Naive thymus-derived CD4-positive, alpha-beta T cell (primary cell): ENCODE measurements at regions of chr15 and their contacts with region 1.

Region 1: DNA sequence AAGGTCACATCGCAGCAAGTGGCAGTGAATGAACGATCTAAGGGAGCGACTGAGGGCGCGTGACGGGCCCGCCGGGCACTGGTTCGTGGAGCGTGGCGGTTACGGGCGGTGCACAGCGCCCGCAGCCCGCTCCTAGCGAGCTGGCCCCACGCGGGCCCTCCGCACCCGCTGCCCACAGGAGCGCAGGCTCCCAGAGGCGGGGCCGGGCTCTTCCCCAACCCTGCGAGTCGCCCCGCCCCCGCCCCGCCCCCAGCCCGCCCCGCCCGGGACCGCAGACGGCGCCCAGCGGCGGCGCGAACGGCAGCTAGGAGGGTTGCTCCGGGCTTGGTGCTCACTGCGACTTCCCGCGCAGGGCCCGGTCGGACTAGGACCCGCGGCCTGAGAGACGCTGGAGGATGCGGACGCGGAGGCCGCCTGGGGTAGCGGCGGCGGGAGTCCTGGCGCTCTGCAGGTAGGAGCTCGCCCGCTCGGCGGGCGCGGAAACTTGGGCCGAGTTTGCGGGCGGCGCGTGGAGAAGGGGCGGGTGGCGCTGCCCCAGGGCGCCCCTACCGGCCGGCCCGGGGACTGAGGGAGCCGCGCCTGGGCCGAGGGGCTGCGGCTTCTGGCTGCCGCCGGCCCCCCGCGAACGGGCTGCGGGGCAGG is at the start of gene C15orf39:
- DNase-seq: peak; percentile 66 to 88 (median 84)
- ATAC-seq: peak; percentile 78
- H3K4me3 ChIP-seq: peak within 1 kb of the TSS; percentile 84
- H3K4me3 Mint-ChIP-seq: peak within 1 kb of the TSS; percentile 89 to 98 (median 94)
- H3K27ac ChIP-seq: peak within 1 kb of the TSS; percentile 92
- H3K27ac Mint-ChIP-seq: peak within 1 kb of the TSS; percentile 69 to 95 (median 88)
- H3K4me1 ChIP-seq: peaks cover 26 to 27% of the 10 kb centered on the region in 2 donors
- H3K4me1 Mint-ChIP-seq: peaks cover 19 to 68% (median 39%) of the 10 kb centered on the region in 7 donors
- H3K27me3 ChIP-seq: no peaks in the 10 kb centered on the region
- H3K27me3 Mint-ChIP-seq: no peaks in the 10 kb centered on the region
- total RNA-seq, gene C15orf39: 30.9 to 124 (median 50.5) TPM

Region 2: GRCh38 chr15:73927476-73928240 is 1274.1 kb before region 1 on chr15:
- CTCF ChIA-PET with region 1: no interaction called
- POLR2A ChIA-PET with region 1: no interaction called
- intact Hi-C with region 1: loop called in 1 of 2 experiments (anchors 5 kb)
- DNase-seq: peak; percentile 69 to 86 (median 84)
- ATAC-seq: peak; percentile 93
- H3K4me3 ChIP-seq: peak overlapping the region; percentile 74
- H3K4me3 Mint-ChIP-seq: peak overlapping the region; percentile 62 to 83 (median 74)
- H3K27ac ChIP-seq: peak overlapping the region; percentile 77
- H3K27ac Mint-ChIP-seq: peak overlapping the region; percentile 26 to 69 (median 51)
- H3K4me1 ChIP-seq: peaks cover 15 to 21% of the 10 kb centered on the region in 2 donors
- H3K4me1 Mint-ChIP-seq: peaks cover 25 to 55% (median 39%) of the 10 kb centered on the region in 7 donors
- H3K27me3 ChIP-seq: no peaks in the 10 kb centered on the region
- H3K27me3 Mint-ChIP-seq: peaks cover 0 to 6% (median 0%) of the 10 kb centered on the region in 5 donors

Region 3: GRCh38 chr15:74787251-74788041 is 414.3 kb before region 1 on chr15:
- CTCF ChIA-PET with region 1: interaction called, 3 read pairs
- POLR2A ChIA-PET with region 1: no interaction called
- intact Hi-C with region 1: loop called (anchors 5 to 10 kb)
- DNase-seq: peak; percentile 69 to 97 (median 96)
- ATAC-seq: peak; percentile 85
- H3K4me3 ChIP-seq: peak overlapping the region; percentile 85
- H3K4me3 Mint-ChIP-seq: peak overlapping the region; percentile 87 to 97 (median 93)
- H3K27ac ChIP-seq: peak overlapping the region; percentile 92
- H3K27ac Mint-ChIP-seq: peak overlapping the region; percentile 95 to 99 (median 98)
- H3K4me1 ChIP-seq: peaks cover 66 to 72% of the 10 kb centered on the region in 2 donors
- H3K4me1 Mint-ChIP-seq: peaks cover 57 to 78% (median 75%) of the 10 kb centered on the region in 7 donors
- H3K27me3 ChIP-seq: no peaks in the 10 kb centered on the region
- H3K27me3 Mint-ChIP-seq: no peaks in the 10 kb centered on the region

Region 4: DNA sequence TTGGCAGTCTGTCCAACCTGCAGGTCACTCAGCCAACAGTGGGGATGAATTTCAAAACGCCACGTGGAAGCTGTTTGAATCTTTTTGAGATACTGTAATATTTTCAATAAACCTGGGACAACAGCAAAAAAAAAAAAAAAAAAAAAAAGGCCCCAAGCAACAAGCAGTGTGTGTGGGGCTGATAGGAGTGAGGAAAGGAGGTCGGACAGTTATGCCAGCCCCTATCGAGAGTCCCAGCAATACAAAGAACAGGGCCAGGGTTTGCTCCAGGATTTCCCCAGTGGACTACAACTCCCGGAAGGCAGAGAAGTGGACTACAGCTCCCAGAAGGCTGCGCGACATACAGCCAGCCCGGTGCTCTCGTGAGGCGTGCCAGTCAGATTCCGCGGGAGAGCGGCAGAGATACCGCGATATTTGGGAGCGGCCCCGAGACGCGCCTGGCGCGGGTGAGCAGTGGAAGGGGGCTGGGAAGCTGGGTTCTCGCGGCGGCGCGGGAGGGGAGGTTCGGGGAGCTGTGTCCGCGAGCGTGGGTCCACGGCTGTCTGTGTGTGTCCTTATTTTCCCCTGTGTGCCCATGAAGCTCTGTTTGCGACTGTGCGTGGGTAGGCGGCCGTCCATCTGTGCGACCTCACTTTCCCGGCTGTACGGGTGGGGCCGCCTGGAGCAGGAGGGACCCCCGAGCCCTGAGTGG is 178.4 kb before region 1 on chr15 and contains the start of gene PPCDC:
- CTCF ChIA-PET with region 1: interaction called, 59 read pairs
- POLR2A ChIA-PET with region 1: interaction called, 12 read pairs
- intact Hi-C with region 1: loop called in 1 of 2 experiments (anchors 1 kb)
- DNase-seq: peak; percentile 79 to 94 (median 91)
- ATAC-seq: peak; percentile 100
- H3K4me3 ChIP-seq: peak within 1 kb of the TSS; percentile 84
- H3K4me3 Mint-ChIP-seq: peak within 1 kb of the TSS; percentile 81 to 99 (median 97)
- H3K27ac ChIP-seq: peak within 1 kb of the TSS; percentile 84
- H3K27ac Mint-ChIP-seq: peak within 1 kb of the TSS; percentile 87 to 98 (median 93)
- H3K4me1 ChIP-seq: no peaks in the 10 kb centered on the region
- H3K4me1 Mint-ChIP-seq: peaks cover 11 to 30% (median 26%) of the 10 kb centered on the region in 7 donors
- H3K27me3 ChIP-seq: no peaks in the 10 kb centered on the region
- H3K27me3 Mint-ChIP-seq: no peaks in the 10 kb centered on the region
- total RNA-seq, gene PPCDC: 11.7 to 31.3 (median 17.1) TPM

Region 5: GRCh38 chr15:75090388-75090734 is 111.4 kb before region 1 on chr15:
- CTCF ChIA-PET with region 1: no interaction called
- POLR2A ChIA-PET with region 1: no interaction called
- intact Hi-C with region 1: no loop called
- DNase-seq: no peak
- ATAC-seq: peak; percentile 82
- H3K4me3 ChIP-seq: no peak overlapping the region
- H3K4me3 Mint-ChIP-seq: no peak overlapping the region
- H3K27ac ChIP-seq: no peak overlapping the region
- H3K27ac Mint-ChIP-seq: no peak overlapping the region
- H3K4me1 ChIP-seq: no peaks in the 10 kb centered on the region
- H3K4me1 Mint-ChIP-seq: peaks cover 0 to 13% (median 0%) of the 10 kb centered on the region in 7 donors
- H3K27me3 ChIP-seq: no peaks in the 10 kb centered on the region
- H3K27me3 Mint-ChIP-seq: peaks cover 0 to 14% (median 0%) of the 10 kb centered on the region in 5 donors

Region 6: DNA sequence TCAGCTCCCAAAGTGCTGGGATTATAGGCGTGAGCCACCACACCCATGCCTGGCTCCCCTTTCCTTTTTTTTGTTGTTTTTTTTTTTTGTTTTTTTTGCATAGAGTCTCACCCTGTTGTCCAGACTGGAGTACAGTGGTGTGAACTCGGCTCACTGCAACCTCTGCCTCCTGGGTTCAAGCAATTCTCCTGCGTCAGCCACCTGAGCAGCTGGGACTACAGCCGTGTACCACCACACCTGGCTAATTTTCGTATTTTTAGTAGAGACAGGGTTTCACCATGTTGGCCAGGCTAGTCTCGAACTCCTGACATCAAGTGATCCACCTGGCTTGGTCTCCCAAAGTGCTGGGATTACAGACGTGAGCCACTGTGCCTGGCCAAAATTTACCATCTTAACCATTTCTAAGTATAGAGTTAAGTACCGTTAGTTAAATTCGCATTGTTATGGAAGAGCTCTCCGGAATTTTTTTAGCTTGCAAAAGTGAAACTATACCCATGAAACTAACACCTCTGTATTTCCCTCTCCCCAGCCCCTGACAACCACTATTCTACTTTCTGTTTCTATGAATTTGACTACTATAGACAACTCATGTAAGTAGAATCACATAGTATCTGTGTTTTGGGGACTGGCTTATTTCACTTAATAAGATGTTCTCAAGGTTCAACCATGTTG is 71.0 kb before region 1 on chr15:
- CTCF ChIA-PET with region 1: no interaction called
- POLR2A ChIA-PET with region 1: no interaction called
- intact Hi-C with region 1: loop called in 1 of 2 experiments (anchors 2 kb)
- DNase-seq: no peak
- ATAC-seq: peak; percentile 83
- H3K4me3 ChIP-seq: peak overlapping the region; percentile 11
- H3K4me3 Mint-ChIP-seq: peak overlapping the region in 9 of 10 donors; percentile 30 to 85 (median 62)
- H3K27ac ChIP-seq: no peak overlapping the region
- H3K27ac Mint-ChIP-seq: peak overlapping the region in 3 of 9 donors; percentile 30 to 93 (median 66)
- H3K4me1 ChIP-seq: peaks cover 0 to 11% of the 10 kb centered on the region in 2 donors
- H3K4me1 Mint-ChIP-seq: peaks cover 6 to 39% (median 8%) of the 10 kb centered on the region in 7 donors
- H3K27me3 ChIP-seq: no peaks in the 10 kb centered on the region
- H3K27me3 Mint-ChIP-seq: peaks cover 0 to 14% (median 0%) of the 10 kb centered on the region in 5 donors

Region 7: GRCh38 chr15:75639709-75640482 is 438.2 kb after region 1 on chr15 and contains the start of gene IMP3:
- CTCF ChIA-PET with region 1: no interaction called
- POLR2A ChIA-PET with region 1: interaction called, 5 read pairs
- intact Hi-C with region 1: loop called in 1 of 2 experiments (anchors 5 kb)
- DNase-seq: peak; percentile 75 to 96 (median 93)
- ATAC-seq: peak; percentile 95
- H3K4me3 ChIP-seq: peak within 1 kb of the TSS; percentile 97
- H3K4me3 Mint-ChIP-seq: peak within 1 kb of the TSS; percentile 84 to 98 (median 95)
- H3K27ac ChIP-seq: peak within 1 kb of the TSS; percentile 85
- H3K27ac Mint-ChIP-seq: peak within 1 kb of the TSS; percentile 39 to 98 (median 96)
- H3K4me1 ChIP-seq: peaks cover 23 to 24% of the 10 kb centered on the region in 2 donors
- H3K4me1 Mint-ChIP-seq: peaks cover 33 to 49% (median 39%) of the 10 kb centered on the region in 7 donors
- H3K27me3 ChIP-seq: no peaks in the 10 kb centered on the region
- H3K27me3 Mint-ChIP-seq: no peaks in the 10 kb centered on the region
- total RNA-seq, gene IMP3: 32.3 to 100 (median 89.5) TPM